ENCODE measurements at regions of chr11 and their contacts with region 1.

Region 1: DNA sequence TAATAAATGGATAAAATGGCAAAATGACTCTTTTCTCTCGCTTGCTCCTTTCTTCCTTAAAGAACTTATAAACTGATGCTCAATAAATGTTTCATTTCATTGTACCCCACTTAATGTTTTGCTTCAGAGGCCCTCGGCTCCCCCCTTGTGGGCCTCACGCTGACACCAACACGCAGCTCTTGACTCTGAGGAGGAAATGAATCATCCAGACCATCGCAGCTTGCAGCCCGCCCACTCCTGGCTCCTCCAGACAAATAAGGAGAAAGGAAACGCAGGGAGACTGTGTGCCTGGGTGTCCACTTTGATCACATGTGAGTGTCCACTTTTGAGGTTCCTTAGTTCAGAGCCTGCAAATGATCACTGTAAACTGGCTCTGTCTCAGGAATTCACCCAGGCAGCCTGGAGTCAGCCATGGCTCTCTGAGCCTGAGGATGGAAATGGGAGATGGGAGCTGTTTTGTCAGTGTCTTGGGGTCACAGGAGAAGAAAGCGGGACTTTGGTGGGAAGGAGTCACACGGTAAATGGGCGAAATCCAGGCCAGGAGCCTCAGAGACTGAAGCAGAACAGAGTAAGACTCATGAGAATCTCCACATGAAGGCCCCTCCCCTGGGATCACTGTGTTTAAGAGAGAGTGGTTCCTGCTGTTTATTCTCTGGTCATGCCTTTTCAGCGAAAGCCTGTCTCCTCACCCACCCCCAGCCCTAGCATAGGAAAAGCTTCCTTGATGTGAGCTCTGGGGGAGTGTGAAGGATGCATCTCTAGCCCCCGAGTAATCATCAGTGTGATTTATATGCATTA is 96.5 kb downstream of the CWC15 start:
- DNase-seq: peak; percentile 84 to 87
- H3K4me3 ChIP-seq: no peak overlapping the region
- H3K27ac ChIP-seq: peak overlapping the region; percentile 41 to 55
- H3K4me1 ChIP-seq: peaks cover 0 to 32% (median 19%) of the 10 kb centered on the region in 4 donors
- H3K27me3 ChIP-seq: no peaks in the 10 kb centered on the region
- CTCF ChIP-seq: peak in 1 of 2 experiments; percentile 25

Region 2: DNA sequence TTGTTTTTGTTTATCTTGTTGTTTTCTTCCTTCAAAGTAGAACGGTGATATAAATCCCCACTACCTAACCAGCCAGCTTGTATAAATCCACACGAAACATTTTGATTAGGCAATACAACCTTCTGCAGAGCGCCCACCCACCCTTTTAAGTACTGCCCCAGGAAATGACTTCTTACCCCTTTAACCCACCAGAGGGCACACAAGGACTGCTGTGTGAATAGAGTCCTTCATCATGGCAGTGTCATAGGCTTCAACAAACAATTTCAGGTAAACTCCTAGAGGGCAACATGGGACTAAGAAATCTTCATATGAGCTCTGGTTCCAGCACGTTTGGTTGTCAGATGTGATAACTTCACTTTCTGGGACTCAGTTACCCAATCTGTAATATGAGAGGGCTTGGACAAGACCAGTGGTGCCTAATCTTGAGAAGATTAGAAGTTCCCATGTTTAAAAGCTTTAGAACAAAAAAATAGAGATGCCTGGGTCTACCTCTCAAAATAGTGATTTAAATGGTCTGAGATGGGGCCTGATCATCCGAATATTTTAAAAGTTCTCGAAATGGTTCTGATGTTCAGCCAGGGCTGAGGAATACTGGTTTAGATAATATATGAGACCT is 253.6 kb before region 1 on chr11:
- intact Hi-C with region 1: loop called (anchors 10 kb)
- DNase-seq: peak in 1 of 2 donors; percentile 27
- H3K4me3 ChIP-seq: no peak overlapping the region
- H3K27ac ChIP-seq: no peak overlapping the region
- H3K4me1 ChIP-seq: no peaks in the 10 kb centered on the region
- H3K27me3 ChIP-seq: no peaks in the 10 kb centered on the region
- CTCF ChIP-seq: peak; percentile 70 to 71

Region 3: GRCh38 chr11:94997437-94997836 is 120.6 kb after region 1 on chr11:
- intact Hi-C with region 1: no loop called
- DNase-seq: no peak
- H3K4me3 ChIP-seq: no peak overlapping the region
- H3K27ac ChIP-seq: no peak overlapping the region
- H3K4me1 ChIP-seq: no peaks in the 10 kb centered on the region
- H3K27me3 ChIP-seq: no peaks in the 10 kb centered on the region
- CTCF ChIP-seq: no peak

Measured in tibial artery (tissue), 4 donors.